Sciatic nerve (tissue), 2 donors: ENCODE measurements at regions of chr15 and their contacts with region 1.

Region 1: DNA sequence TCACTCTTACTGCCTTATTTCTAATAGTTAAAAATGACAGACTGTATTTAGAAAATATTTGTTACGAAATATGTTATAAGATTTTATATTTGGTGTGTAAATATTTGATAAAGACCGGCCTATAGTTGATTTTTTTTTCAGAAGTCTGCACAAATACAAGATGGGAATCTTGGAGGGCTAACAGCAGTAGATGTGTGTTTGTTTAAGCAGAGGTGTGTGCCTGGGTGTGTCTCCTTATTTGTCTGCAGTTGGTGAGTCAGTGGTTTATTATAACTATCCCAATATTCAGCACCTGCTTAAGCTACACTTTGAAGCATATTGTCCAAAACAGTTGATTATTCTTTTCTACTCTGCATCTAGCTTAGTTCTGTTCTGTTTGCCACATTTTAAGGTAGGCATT is 12.4 kb downstream of the GLCE start:
- DNase-seq: no peak
- ATAC-seq: no peak

Region 2: DNA sequence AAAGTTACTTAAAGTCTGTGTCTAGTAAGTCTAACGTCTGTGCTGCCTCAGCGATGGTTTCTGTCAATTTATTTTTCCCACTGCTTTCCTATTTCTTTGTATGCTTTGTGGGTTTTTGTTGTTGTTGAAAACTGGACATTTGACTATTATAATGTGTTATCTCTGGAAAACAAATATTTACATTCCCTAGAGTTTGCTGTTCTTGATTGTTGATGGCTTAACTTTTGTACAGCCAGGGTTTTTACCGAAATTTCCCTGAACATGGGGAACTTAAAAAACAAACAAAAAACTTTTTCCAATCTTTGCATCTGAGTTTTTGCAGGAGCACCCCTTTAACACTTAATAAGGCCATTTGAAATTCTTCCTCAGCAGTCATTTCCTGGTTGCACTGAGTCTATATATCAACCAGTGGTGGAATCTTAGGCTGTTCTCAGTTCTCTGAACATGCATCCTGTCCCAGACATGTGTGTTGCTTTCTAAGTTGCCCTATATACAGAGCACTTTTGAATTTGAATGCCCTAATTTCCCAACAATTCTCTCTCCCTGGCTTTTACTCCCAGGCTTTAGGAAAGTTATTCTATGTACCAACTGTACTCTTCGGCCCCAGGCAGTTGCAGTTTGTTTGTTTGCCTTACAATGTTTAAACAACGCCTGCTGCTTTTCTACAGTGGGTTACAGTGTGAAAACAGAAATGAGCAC is 1130.5 kb before region 1 on chr15:
- intact Hi-C with region 1: loop called (anchors 10 kb)
- DNase-seq: no peak
- ATAC-seq: no peak